Mammary epithelial cell (primary cell): ENCODE measurements at regions of chr6 and their contacts with region 1.

Region 1: GRCh38 chr6:110098511-110099116 is 80.9 kb downstream of the WASF1 start:
- DNase-seq: peak; percentile 98
- H3K4me3 ChIP-seq: no peak overlapping the region
- H3K27ac ChIP-seq: peak overlapping the region; percentile 95
- H3K4me1 ChIP-seq: peaks cover 46% of the 10 kb centered on the region
- H3K27me3 ChIP-seq: no peaks in the 10 kb centered on the region
- CTCF ChIP-seq: no peak

Region 2: GRCh38 chr6:109493865-109494264 is 604.7 kb before region 1 on chr6:
- CTCF ChIA-PET with region 1: no interaction called
- dilution Hi-C with region 1: no loop called
- in situ Hi-C with region 1: no loop called
- intact Hi-C with region 1: no loop called
- DNase-seq: no peak
- H3K4me3 ChIP-seq: no peak overlapping the region
- H3K27ac ChIP-seq: no peak overlapping the region
- H3K4me1 ChIP-seq: no peaks in the 10 kb centered on the region
- H3K27me3 ChIP-seq: no peaks in the 10 kb centered on the region
- CTCF ChIP-seq: no peak

Region 3: DNA sequence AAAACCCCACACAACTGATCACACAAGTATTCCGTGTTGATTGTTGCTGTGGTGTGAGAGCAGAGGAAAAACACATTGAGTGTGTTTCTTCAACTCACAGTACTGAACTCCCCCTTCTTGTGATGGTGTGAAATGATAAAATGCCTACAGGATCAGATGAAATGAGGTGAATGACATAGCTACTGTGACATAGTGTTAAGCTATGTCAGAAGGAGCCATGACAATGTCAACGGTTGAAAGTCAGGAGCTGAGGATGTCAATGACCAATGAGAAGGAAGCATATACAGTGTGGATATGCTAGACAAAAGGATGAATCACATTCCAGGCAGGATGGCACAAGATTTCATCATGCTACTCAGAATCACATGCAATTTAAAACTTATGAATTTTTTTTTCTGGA is 42.0 kb after region 1 on chr6:
- CTCF ChIA-PET with region 1: no interaction called
- dilution Hi-C with region 1: no loop called
- in situ Hi-C with region 1: no loop called
- intact Hi-C with region 1: loop called (anchors 2 kb)
- DNase-seq: peak; percentile 65
- H3K4me3 ChIP-seq: no peak overlapping the region
- H3K27ac ChIP-seq: peak overlapping the region; percentile 79
- H3K4me1 ChIP-seq: peaks cover 12% of the 10 kb centered on the region
- H3K27me3 ChIP-seq: no peaks in the 10 kb centered on the region
- CTCF ChIP-seq: no peak